Sciatic nerve (tissue), 2 donors: ENCODE measurements at regions of chr11 and their contacts with region 1.

Region 1: DNA sequence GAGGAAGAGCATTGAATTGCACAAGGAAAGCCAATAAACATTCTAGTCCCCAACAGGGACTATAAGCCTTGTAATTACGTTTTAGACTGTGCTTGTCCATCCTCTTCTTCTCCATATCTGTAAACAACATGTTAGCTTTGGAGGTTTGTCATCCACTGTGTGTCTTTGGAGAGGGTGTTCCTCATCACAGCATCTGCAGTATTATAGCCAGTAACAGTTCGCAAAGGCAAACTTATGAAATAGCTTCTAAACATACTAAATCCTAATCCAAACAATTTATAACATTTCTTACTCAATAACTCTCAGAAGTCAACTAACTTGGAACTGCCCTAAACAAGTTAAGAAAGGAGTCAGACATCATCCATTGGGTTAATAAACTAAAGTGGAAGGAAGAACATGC is 10.3 kb upstream of the BDNF start:
- DNase-seq: no peak
- ATAC-seq: no peak

Region 2: GRCh38 chr11:27761356-27761755 is 50.8 kb after region 1 on chr11:
- intact Hi-C with region 1: no loop called
- DNase-seq: no peak
- ATAC-seq: no peak

Region 3: GRCh38 chr11:27777013-27777412 is 66.5 kb after region 1 on chr11:
- intact Hi-C with region 1: no loop called
- DNase-seq: no peak
- ATAC-seq: no peak

Region 4: GRCh38 chr11:27847496-27847895 is 137.0 kb after region 1 on chr11:
- intact Hi-C with region 1: no loop called
- DNase-seq: no peak
- ATAC-seq: peak; percentile 78

Region 5: DNA sequence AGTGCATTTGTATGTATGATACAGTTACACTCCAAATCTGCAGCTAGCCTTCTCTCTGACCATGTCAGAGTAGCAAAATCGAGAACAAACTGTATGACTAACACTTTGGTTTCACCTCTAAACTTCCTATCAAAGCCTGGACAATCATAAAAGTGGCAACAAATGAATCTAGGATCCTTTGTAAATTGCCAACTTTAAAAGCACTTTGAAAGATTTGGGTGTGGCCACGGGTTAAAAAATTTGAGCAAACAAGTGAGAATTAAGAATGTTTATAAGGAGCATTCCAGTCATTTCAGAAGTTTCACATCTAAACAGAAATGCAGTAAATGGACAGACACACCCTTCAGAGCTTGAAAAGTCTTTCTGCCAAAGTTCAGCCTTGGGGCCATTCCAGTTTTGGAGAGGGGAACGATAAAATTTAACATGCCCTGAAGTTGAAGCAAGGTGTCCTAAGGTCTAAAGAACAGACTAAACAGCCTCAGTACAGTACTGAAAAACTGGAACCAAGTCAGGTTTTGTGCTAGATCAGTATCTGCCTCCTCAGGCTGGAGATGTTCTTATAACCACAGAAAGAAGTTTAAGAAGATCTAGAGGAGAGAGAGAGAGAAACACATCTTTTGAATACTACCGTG is 171.6 kb after region 1 on chr11:
- intact Hi-C with region 1: loop called (anchors 2 kb)
- DNase-seq: no peak
- ATAC-seq: peak; percentile 64